ENCODE measurements at regions of chr10 and their contacts with region 1.

Region 1: GRCh38 chr10:130817046-130817624 is 494.4 kb downstream of the TCERG1L start:
- DNase-seq: no peak
- H3K4me3 Mint-ChIP-seq: no peak overlapping the region
- H3K27ac Mint-ChIP-seq: no peak overlapping the region
- H3K4me1 Mint-ChIP-seq: no peaks in the 10 kb centered on the region
- H3K27me3 Mint-ChIP-seq: no peaks in the 10 kb centered on the region

Region 2: DNA sequence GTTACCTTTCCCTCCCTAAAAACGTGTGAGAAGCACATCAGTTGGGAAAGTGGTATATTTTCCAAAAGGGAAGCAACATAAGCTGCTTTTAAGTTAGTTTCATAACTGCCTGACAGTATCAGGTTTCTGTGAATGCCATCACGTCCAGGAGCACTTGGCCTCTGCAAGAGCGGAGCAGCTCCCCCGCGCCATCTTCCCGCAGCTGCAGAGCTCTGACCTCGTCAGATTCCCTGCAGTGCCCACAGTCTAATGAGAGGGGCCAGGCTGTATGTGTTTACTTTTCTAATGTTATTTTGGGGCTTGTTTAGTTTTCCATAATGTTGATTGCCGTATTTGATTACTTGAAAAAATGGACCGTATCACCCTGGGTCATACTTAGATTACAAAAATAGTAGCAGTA is 1275.9 kb before region 1 on chr10:
- intact Hi-C with region 1: loop called (anchors 5 kb)
- DNase-seq: no peak
- H3K4me3 Mint-ChIP-seq: no peak overlapping the region
- H3K27ac Mint-ChIP-seq: no peak overlapping the region
- H3K4me1 Mint-ChIP-seq: no peaks in the 10 kb centered on the region
- H3K27me3 Mint-ChIP-seq: no peaks in the 10 kb centered on the region

Measured in activated T-helper 1 cell treated with anti-CD3 and anti-CD28 coated beads, Interleukin-12 subunit alpha, Interleukin-12 subunit beta, Interleukin-2, Interleukin-4 antibody, amounts not matched to agents 30 ng/mL and 10 ng/mL and 1 ng/mL, durations not matched to agents 14 hours and 24 hours and 36 hours (primary cell).